ENCODE measurements at regions of chr11 and their contacts with region 1.

Region 1: GRCh38 chr11:62831520-62832335 is at the start of gene STX5:
- DNase-seq: peak; percentile 89
- H3K4me3 ChIP-seq: peak within 1 kb of the TSS; percentile 92
- H3K27me3 ChIP-seq: no peaks in the 10 kb centered on the region
- CTCF ChIP-seq: no peak
- polyA plus RNA-seq, gene STX5: 61.5 and 76.6 TPM in 2 replicates

Region 2: DNA sequence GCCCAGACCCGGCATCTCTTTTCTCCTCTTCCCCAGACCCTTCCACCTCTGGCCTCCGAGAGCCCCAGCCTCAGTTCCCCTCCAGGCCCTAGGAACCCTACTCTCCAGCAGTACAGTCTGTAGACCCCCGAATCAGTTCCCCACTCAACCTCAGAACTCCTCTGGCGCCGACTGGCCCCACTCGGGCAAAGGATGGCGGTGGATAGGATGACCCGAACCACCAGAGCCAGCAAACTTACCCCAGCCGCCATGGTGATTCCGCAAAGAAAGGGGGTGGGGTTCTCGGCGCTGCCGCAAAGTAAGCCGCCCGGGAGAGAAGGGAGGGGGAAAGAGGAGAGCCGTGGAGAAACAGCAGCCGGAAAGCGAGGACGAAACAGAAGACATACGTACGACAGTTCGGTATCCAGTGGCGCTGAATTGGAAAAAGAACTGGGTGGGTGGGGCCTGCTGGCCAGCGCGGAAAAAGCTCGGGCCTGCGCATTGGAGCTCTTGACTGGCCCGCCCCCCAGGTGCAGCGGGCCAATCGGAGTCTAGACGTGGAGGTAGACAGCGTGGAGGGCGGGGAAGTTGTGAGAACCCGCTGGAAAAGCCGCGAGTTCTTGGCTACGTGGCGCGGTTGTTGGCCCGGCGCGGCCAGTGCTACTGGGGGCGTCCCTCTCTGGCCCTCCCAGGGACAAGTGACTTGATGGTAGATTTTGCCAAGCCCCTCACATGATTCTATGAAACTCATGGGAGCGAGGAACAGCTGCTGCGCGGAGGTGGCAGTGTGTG is 258.0 kb before region 1 on chr11 and contains the start of gene EEF1G:
- CTCF ChIA-PET with region 1: no interaction called
- POLR2A ChIA-PET with region 1: no interaction called
- DNase-seq: peak; percentile 100
- H3K4me3 ChIP-seq: peak within 1 kb of the TSS; percentile 63
- H3K27me3 ChIP-seq: no peaks in the 10 kb centered on the region
- CTCF ChIP-seq: no peak
- polyA plus RNA-seq, gene EEF1G: 2,358 and 2,459 TPM in 2 replicates

Region 3: DNA sequence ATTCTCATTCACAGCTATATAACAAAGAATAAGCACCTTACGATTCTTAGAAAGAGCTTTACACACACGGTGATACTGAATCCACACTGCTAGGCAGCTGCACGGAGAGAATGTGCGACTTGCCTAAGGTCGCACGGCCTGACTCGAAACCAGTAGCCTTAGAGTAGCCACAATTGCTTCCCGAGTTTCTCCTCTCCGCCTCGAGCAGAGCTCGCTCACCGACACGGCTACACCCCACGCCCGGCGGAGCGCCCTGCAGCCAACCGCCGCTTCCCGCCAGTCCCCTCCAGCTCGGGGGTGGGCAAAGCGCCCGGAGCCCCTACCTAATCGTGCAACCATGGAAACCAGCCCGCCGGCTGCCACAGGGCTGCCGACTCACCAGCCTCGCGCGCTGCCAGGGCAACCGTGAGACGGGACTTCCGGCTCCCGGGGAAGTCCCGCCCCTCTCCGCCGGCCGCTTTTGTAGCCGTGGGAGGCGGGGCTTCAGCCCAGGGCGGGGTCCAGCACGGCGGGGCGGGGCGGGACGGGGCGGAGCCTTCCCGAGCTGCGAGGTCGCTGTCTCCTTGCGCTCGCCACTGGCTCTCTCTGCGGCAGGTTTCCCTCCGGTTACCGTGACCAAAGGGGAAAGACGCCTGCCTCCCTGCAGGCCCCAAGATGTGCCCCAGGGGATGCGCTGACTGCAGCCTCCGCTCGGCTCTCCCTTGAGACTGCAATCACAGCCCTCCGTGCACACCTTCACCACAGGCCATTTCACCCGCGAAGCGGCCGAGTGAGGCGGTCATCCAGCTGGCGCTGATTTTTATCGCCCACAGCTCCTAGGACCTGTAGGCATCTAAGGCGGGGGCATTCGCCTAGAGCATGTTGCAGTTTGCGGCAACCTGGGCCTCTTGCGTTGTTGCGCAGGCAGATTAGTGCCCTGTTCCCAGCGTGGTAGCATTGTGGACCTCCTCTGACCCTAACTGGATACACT is 125.6 kb before region 1 on chr11:
- CTCF ChIA-PET with region 1: no interaction called
- POLR2A ChIA-PET with region 1: no interaction called
- DNase-seq: peak; percentile 57
- H3K4me3 ChIP-seq: peak overlapping the region; percentile 58
- H3K27me3 ChIP-seq: no peaks in the 10 kb centered on the region
- CTCF ChIP-seq: no peak

Region 4: DNA sequence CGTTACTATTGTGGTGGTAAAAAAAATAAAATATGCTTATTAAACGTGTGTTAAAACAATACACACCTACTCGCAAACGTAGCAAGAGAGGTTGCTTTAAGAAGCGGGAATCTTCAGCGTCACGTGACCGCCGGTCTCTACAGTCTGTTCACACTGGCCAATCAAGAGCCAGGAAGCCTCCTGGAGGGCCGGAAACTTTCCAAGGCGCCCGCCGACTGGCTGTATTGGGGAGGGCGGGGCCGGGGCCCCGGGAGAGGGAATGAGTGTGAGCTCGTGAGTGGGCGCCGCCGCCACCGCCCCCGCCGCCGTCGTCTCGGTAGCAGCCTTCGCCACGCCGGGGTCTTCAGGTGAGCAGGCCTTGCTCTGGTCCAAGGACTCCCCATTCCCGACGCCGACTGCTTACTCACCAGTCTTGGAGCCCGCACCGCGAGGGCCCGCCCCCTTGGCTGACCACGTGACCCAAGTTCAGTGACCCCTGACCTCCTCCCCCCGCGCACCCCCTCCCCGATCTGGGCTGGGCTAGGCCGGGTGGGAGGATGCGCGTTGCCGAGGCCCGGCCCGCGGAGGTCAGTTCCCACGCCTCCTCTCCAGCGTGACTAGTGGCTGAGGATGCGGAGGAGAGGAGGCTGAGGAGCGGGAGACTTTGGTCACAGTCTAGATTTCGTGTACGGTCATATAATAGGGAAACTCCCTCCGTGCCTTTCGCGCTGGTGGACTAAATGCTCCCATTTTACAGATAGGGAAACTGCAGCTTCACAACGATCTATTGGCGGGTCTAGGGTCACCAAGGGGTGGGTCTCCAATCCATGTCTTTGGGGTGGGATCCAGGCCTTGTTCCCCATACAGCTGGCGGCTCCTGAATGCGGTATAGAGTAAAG is 60.3 kb before region 1 on chr11 and contains the start of gene TAF6L:
- CTCF ChIA-PET with region 1: no interaction called
- POLR2A ChIA-PET with region 1: interaction called, 10 read pairs
- DNase-seq: peak; percentile 80
- H3K4me3 ChIP-seq: peak within 1 kb of the TSS; percentile 69
- H3K27me3 ChIP-seq: no peaks in the 10 kb centered on the region
- CTCF ChIP-seq: no peak
- polyA plus RNA-seq, gene TAF6L: 9.1 and 17.0 TPM in 2 replicates

Region 5: GRCh38 chr11:62805076-62805892 is 26.4 kb before region 1 on chr11 and contains the start of gene NXF1:
- CTCF ChIA-PET with region 1: interaction called, 5 read pairs
- POLR2A ChIA-PET with region 1: interaction called, 17 read pairs
- DNase-seq: peak; percentile 65
- H3K4me3 ChIP-seq: peak within 1 kb of the TSS; percentile 77
- H3K27me3 ChIP-seq: no peaks in the 10 kb centered on the region
- CTCF ChIP-seq: peak; percentile 15; the same call in 1 of the 2 replicates
- polyA plus RNA-seq, gene NXF1: 37.8 and 51.0 TPM in 2 replicates

Region 6: GRCh38 chr11:62948765-62949320 is 117.1 kb after region 1 on chr11:
- CTCF ChIA-PET with region 1: no interaction called
- POLR2A ChIA-PET with region 1: no interaction called
- DNase-seq: no peak
- H3K4me3 ChIP-seq: no peak overlapping the region
- H3K27me3 ChIP-seq: 0 out of 2 replicates have a peak, but pooled peaks cover 1% of the 10 kb centered on the region
- CTCF ChIP-seq: no peak